T-cell (primary cell): ENCODE measurements at regions of chr15 and their contacts with region 1.

Region 1: DNA sequence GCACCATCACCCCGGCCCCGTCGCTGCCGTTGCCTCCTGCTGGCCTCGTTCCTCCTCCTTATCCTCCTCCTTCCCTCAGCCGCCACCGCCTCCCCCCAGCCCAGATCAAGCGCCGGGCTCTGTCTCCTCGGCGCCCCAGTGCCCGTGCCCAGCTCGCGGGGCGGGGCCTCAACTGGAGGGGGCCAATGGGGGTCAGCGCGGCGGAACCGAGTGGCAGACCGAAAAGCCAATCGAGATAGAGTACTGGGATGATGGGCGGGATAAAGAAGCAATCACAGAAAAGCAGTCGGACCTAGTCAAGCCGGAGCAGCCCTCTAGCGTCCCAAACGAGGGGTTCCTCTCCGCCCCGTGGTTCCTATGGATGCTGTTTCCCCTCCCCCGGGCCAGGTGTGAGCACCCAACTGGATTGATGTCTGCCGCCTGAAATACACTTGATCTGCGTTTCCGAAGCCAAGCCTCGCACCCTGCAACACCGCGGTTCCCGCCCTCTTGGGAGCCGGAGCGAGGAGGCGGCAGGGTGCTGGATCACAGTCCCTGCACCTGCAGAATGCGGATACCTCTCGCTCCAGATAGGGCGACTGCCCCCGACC is at the start of gene FRMD5:
- DNase-seq: peak; percentile 63 to 90 (median 77)
- ATAC-seq: peak; percentile 95 to 97 (median 95)
- H3K4me3 ChIP-seq: peak within 1 kb of the TSS; percentile 54 to 73
- H3K4me3 Mint-ChIP-seq: peak within 1 kb of the TSS; percentile 86 to 92 (median 88)
- H3K27ac ChIP-seq: no peak within 1 kb of the TSS
- H3K27ac Mint-ChIP-seq: no peak within 1 kb of the TSS
- H3K4me1 ChIP-seq: peaks cover 0 to 20% of the 10 kb centered on the region in 2 experiments
- H3K4me1 Mint-ChIP-seq: peaks cover 18 to 22% (median 20%) of the 10 kb centered on the region in 3 donors
- H3K27me3 ChIP-seq: peaks cover 10 to 46% of the 10 kb centered on the region in 2 experiments
- H3K27me3 Mint-ChIP-seq: peaks cover 55 to 69% of the 10 kb centered on the region in 2 donors
- total RNA-seq, gene FRMD5: 0.09 to 0.26 (median 0.23) TPM in 3 of 5 donors, not detected in the others

Region 2: GRCh38 chr15:44207643-44208042 is 12.4 kb after region 1 on chr15:
- CTCF ChIA-PET with region 1: no interaction called
- POLR2A ChIA-PET with region 1: interaction called in 1 of 2 experiments, 15 read pairs
- DNase-seq: no peak
- ATAC-seq: no peak
- H3K4me3 ChIP-seq: no peak overlapping the region
- H3K4me3 Mint-ChIP-seq: no peak overlapping the region
- H3K27ac ChIP-seq: no peak overlapping the region
- H3K27ac Mint-ChIP-seq: no peak overlapping the region
- H3K4me1 ChIP-seq: no peaks in the 10 kb centered on the region
- H3K4me1 Mint-ChIP-seq: no peaks in the 10 kb centered on the region
- H3K27me3 ChIP-seq: peaks cover 5 to 15% of the 10 kb centered on the region in 2 experiments
- H3K27me3 Mint-ChIP-seq: peaks cover 14 to 15% of the 10 kb centered on the region in 2 donors